ENCODE measurements at regions of chr7 and their contacts with region 1.

Region 1: GRCh38 chr7:152313831-152314604 is 121.8 kb downstream of the KMT2C start:
- DNase-seq: peak in 3 of 9 experiments; percentile 34 to 75 (median 58)
- ATAC-seq: peak; percentile 89
- H3K4me3 ChIP-seq: no peak overlapping the region
- H3K4me3 Mint-ChIP-seq: peak overlapping the region; percentile 12
- H3K27ac ChIP-seq: no peak overlapping the region
- H3K27ac Mint-ChIP-seq: peak overlapping the region; percentile 8
- H3K4me1 ChIP-seq: peaks cover 10% of the 10 kb centered on the region
- H3K4me1 Mint-ChIP-seq: peaks cover 37% of the 10 kb centered on the region
- H3K27me3 ChIP-seq: no peaks in the 10 kb centered on the region
- H3K27me3 Mint-ChIP-seq: no peaks in the 10 kb centered on the region
- CTCF ChIP-seq: no peak

Region 2: DNA sequence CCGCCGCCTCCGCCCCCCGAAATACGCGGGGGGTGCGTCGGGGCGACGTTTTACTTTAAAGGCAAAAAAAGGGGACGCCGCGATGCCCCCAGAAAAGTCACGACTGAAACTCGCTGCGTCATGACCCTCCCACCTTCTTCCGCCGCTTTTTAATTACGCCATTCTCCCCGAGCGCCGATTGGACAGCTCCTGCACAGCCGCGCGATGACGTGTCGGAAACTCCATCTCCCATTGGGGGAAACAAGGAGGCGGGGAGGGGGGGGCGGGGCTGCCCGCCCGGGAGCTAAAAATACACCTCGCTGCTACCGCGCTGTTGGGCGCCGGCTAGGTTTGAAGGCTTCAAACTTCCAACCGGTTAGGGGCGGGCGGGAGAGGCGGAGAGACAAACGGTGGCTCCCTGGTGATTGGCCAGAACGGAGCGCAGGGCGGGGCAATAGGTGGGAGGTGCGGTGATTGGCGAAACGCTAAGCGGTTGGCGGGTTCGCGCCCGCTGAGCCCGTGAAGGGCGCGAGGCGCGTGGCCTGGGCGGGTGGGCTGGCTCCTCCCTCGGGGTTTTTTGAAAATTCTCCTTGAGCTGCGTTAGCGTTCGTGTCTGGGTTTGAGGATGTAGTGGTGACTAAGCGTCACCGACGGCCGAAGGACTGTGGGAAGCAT is 794.1 kb before region 1 on chr7 and contains the start of gene RHEB:
- CTCF ChIA-PET with region 1: no interaction called
- POLR2A ChIA-PET with region 1: no interaction called
- intact Hi-C with region 1: no loop called
- DNase-seq: peak; percentile 94 to 99 (median 98)
- ATAC-seq: peak; percentile 82
- H3K4me3 ChIP-seq: peak within 1 kb of the TSS; percentile 65 to 73
- H3K4me3 Mint-ChIP-seq: peak within 1 kb of the TSS; percentile 84
- H3K27ac ChIP-seq: peak within 1 kb of the TSS; percentile 85 to 86
- H3K27ac Mint-ChIP-seq: peak within 1 kb of the TSS; percentile 94
- H3K4me1 ChIP-seq: peaks cover 34% of the 10 kb centered on the region
- H3K4me1 Mint-ChIP-seq: peaks cover 41% of the 10 kb centered on the region
- H3K27me3 ChIP-seq: no peaks in the 10 kb centered on the region
- H3K27me3 Mint-ChIP-seq: no peaks in the 10 kb centered on the region
- CTCF ChIP-seq: no peak
- total RNA-seq, gene RHEB: 57.2 to 61.0 TPM

Region 3: GRCh38 chr7:152330827-152331226 is 16.8 kb after region 1 on chr7:
- CTCF ChIA-PET with region 1: interaction called, 6 read pairs
- POLR2A ChIA-PET with region 1: no interaction called
- intact Hi-C with region 1: loop called in 1 of 2 experiments (anchors 2 kb)
- DNase-seq: no peak
- ATAC-seq: no peak
- H3K4me3 ChIP-seq: no peak overlapping the region
- H3K4me3 Mint-ChIP-seq: no peak overlapping the region
- H3K27ac ChIP-seq: no peak overlapping the region
- H3K27ac Mint-ChIP-seq: no peak overlapping the region
- H3K4me1 ChIP-seq: peaks cover 13% of the 10 kb centered on the region
- H3K4me1 Mint-ChIP-seq: peaks cover 42% of the 10 kb centered on the region
- H3K27me3 ChIP-seq: no peaks in the 10 kb centered on the region
- H3K27me3 Mint-ChIP-seq: no peaks in the 10 kb centered on the region
- CTCF ChIP-seq: no peak